K562 (cell line): ENCODE measurements at regions of chr22 and their contacts with region 1.

Region 1: DNA sequence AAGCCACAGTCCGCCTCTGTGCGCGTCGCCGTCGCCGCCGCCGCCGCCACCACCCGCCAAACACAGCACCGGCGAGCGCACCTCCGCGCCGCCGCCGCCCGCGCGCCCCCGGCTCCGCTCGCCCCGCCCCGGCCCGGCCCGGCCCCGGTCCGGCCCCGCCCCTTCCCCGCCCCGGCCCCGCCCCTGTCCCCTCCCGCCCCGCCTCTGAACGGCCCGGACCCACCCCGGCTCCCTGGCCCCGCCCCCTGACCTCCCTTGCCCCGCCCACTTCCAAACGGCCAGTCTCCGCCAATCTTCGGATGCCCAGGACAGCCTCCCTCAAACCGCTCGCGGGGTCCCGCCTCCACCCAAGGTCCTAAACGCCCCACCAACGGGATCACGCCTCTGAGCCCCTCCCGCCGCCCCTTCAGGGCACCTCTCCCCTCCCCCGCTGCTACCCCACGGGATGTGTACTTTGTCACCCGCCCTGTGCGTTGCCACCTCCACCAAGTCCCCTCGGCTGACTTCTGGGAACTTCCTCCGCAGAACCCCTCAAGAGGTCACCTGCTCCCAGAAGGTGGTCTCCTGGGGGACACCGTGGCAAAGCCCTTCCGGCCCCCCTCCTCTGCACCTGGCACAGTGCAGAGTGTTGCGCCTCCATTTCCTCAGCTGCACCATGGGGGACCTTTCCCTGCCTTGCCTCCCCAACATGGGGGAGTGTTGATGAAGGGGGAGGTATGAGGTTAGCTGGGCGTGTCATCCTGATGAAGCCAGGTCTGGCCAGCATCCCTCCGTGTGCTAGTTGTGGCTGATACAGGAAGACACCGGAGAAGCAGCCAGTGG is at the start of gene KIAA0930:
- DNase-seq: peak; percentile 56 to 98 (median 96)
- ATAC-seq: peak; percentile 75
- H3K4me3 ChIP-seq: peak within 1 kb of the TSS; percentile 39
- H3K27ac ChIP-seq: no peak within 1 kb of the TSS
- H3K4me1 ChIP-seq: peaks cover 0 to 17% of the 10 kb centered on the region in 2 experiments; a peak in 3 of 5 replicates
- H3K27me3 ChIP-seq: no peaks in the 10 kb centered on the region
- CTCF ChIP-seq: no peak
- EP300 ChIP-seq: no peak
- POLR2A ChIP-seq: no peak
- RAD21 ChIP-seq: no peak
- polyA plus RNA-seq, gene KIAA0930: 0.24 to 0.46 TPM

Region 2: GRCh38 chr22:44807915-44808690 is 432.9 kb before region 1 on chr22:
- CTCF ChIA-PET with region 1: no interaction called
- POLR2A ChIA-PET with region 1: no interaction called
- in situ Hi-C with region 1: loop called (anchors 25 kb)
- intact Hi-C with region 1: no loop called
- DNase-seq: peak; percentile 41 to 69 (median 54)
- ATAC-seq: peak; percentile 80
- H3K4me3 ChIP-seq: no peak overlapping the region
- H3K27ac ChIP-seq: no peak overlapping the region
- H3K4me1 ChIP-seq: peaks cover 0 to 3% of the 10 kb centered on the region in 2 experiments; a peak in 1 of 5 replicates
- H3K27me3 ChIP-seq: peaks cover 3 to 29% of the 10 kb centered on the region in 2 experiments; a peak in 3 of 5 replicates
- CTCF ChIP-seq: peak; percentile 32 to 47 (median 38); a peak in 5 of 6 replicates
- EP300 ChIP-seq: no peak
- POLR2A ChIP-seq: no peak
- RAD21 ChIP-seq: no peak

Region 3: GRCh38 chr22:45226527-45227186 is 14.4 kb before region 1 on chr22:
- CTCF ChIA-PET with region 1: no interaction called
- POLR2A ChIA-PET with region 1: no interaction called
- in situ Hi-C with region 1: no loop called
- intact Hi-C with region 1: no loop called
- DNase-seq: no peak
- ATAC-seq: no peak
- H3K4me3 ChIP-seq: no peak overlapping the region
- H3K27ac ChIP-seq: no peak overlapping the region
- H3K4me1 ChIP-seq: peaks cover 0 to 17% of the 10 kb centered on the region in 2 experiments; a peak in 2 of 5 replicates
- H3K27me3 ChIP-seq: no peaks in the 10 kb centered on the region; a peak in 1 of 5 replicates
- CTCF ChIP-seq: no peak
- EP300 ChIP-seq: no peak
- POLR2A ChIP-seq: no peak
- RAD21 ChIP-seq: no peak

Region 4: DNA sequence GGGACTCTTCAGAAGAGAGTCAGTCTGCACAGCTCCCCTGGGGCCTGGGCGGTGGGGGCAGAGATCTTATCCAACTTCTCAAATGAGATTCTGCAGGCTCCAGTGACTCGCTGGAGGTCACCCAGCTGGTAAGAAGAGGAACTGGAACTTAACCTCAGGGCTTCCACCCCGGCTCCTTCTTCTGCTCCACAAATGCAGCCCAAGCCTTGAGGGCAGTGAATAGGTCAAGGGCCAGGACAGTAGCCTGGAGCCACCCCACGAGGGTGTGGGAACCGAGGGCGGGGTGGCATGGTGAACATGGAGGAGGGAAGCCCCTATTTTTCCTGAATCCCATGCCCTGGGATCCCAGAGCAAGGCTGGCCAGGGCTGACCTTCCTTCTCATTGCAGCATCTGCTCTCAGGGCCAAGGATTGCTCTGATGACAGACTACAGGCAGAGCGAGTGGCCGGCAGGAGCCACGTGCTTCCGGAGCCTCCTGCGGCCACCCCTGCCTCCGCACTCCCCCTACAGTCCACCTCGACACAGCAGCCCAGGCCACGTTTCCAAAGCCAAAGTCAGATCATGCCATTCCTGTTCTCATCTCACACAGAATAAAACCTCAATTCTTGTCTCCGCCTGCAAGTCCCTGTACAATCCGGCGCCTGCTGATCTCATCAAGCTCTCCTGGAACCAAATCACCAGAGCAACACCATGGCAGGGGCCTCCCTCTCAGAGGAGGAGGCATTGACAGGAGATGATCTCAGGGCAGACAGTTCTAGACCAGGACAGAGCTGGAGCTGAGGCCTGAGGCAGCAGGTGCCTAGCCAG is 22.6 kb after region 1 on chr22:
- CTCF ChIA-PET with region 1: no interaction called
- POLR2A ChIA-PET with region 1: no interaction called
- in situ Hi-C with region 1: no loop called
- intact Hi-C with region 1: no loop called
- DNase-seq: peak; percentile 58 to 77 (median 68)
- ATAC-seq: peak; percentile 98
- H3K4me3 ChIP-seq: no peak overlapping the region
- H3K27ac ChIP-seq: no peak overlapping the region
- H3K4me1 ChIP-seq: peaks cover 5 to 15% of the 10 kb centered on the region in 2 experiments; a peak in 3 of 5 replicates
- H3K27me3 ChIP-seq: peaks cover 0 to 18% of the 10 kb centered on the region in 2 experiments; a peak in 3 of 5 replicates
- CTCF ChIP-seq: peak; percentile 68 to 75 (median 70)
- EP300 ChIP-seq: no peak
- POLR2A ChIP-seq: no peak
- RAD21 ChIP-seq: peak; percentile 22 to 74; a peak in 3 of 4 replicates